ENCODE measurements at regions of chr5 and their contacts with region 1.

Region 1: DNA sequence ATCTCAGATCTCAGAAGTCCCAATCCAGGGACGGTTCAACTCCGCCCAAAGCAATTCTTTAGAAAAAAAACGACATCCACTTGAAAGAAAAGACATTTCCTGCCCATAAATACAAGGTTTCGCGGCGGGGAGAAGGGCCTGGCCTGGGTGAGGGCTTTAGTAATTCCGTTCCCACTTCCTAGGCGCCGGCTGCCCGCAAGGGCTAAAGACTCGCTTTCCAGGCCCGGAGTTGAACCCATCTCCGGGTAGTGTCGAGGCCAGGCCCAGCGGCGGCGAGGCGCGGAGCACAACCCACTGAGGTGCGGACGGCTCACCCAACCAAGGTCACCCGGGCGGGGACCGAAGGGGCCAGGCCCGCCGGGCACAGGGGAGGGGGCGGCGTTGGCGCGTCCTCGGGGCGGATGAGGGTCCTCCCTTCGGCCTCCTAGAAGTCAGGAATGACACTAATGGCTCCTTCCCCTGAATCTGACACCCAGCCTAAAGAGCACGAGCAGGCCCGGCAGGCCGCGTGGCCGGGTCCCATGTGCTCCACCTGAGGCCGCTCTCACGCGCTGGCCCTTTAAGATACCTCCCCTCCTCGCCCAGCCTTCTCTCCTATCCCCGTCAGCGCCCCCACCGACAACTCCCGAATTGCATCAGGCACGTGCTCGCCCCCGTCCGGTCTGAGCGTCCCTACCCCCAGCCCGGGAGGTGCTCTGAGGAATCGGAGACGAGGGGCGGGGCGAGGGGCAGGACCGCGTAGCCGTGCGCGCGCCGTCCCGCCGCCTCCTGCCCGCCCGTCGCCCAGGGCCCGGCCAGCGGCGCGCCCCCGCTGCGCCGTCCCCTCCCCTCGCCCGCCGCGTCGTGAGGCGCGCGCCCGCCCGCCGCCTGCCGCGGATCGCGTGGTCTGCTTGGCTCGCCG is 467 bp upstream of the LARP1 start:
- DNase-seq: peak; percentile 100
- ATAC-seq: peak; percentile 89
- H3K4me3 Mint-ChIP-seq: peak overlapping the region; percentile 88
- H3K27ac Mint-ChIP-seq: peak overlapping the region; percentile 99
- H3K4me1 Mint-ChIP-seq: peaks cover 33% of the 10 kb centered on the region
- H3K27me3 Mint-ChIP-seq: no peaks in the 10 kb centered on the region

Region 2: DNA sequence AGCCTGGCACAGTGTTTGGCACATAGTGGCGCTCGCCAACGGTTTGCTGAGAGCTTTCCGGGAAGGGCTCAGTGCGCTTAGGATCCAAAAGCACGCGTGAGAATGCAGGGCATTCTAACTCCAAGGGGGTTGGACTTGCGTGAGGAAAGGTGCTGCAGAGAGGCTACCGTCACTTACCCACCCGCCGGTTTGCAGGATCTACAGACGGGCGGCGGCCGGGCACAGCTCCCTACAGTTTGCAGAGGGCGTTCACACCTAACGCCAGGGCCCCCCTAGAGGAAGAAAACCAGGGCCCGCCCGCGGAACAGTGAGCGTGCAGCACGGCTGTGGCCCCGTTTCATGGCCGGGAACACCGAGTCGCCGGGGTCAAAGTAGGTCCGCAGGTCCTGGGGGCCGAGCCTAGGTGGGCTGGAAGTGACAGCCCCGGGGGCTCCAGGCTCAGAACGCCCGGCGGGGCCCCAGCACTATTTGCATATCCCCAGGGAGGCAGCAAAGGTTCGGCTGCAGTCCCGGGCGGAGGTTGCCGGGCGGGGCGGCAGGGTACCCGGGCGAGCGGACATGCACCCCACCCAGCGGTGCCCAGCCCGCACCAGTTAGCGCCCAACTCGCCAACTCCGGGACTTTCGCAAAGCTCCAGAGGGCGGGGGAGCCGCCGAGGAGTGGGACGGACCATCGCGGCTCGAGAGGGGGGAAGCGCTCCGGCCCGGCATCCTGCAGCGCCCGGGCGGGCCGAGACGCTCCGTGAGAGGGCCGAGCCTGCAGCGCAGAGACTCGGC is 564.7 kb before region 1 on chr5:
- CTCF ChIA-PET with region 1: no interaction called
- POLR2A ChIA-PET with region 1: no interaction called
- intact Hi-C with region 1: loop called in 1 of 2 experiments (anchors 5 kb)
- DNase-seq: peak; percentile 85
- ATAC-seq: peak; percentile 72
- H3K4me3 Mint-ChIP-seq: peak overlapping the region; percentile 77
- H3K27ac Mint-ChIP-seq: peak overlapping the region; percentile 69
- H3K4me1 Mint-ChIP-seq: peaks cover 28% of the 10 kb centered on the region
- H3K27me3 Mint-ChIP-seq: peaks cover 9% of the 10 kb centered on the region

Region 3: GRCh38 chr5:154249826-154250225 is 504.9 kb before region 1 on chr5:
- CTCF ChIA-PET with region 1: no interaction called
- POLR2A ChIA-PET with region 1: no interaction called
- intact Hi-C with region 1: no loop called
- DNase-seq: no peak
- ATAC-seq: no peak
- H3K4me3 Mint-ChIP-seq: no peak overlapping the region
- H3K27ac Mint-ChIP-seq: no peak overlapping the region
- H3K4me1 Mint-ChIP-seq: peaks cover 3% of the 10 kb centered on the region
- H3K27me3 Mint-ChIP-seq: no peaks in the 10 kb centered on the region

Region 4: GRCh38 chr5:154445422-154446182 is 309.1 kb before region 1 on chr5 and contains the start of gene SAP30L:
- CTCF ChIA-PET with region 1: no interaction called
- POLR2A ChIA-PET with region 1: no interaction called
- intact Hi-C with region 1: loop called (anchors 1 to 5 kb)
- DNase-seq: peak; percentile 96
- ATAC-seq: peak; percentile 97
- H3K4me3 Mint-ChIP-seq: peak within 1 kb of the TSS; percentile 98
- H3K27ac Mint-ChIP-seq: peak within 1 kb of the TSS; percentile 96
- H3K4me1 Mint-ChIP-seq: peaks cover 40% of the 10 kb centered on the region
- H3K27me3 Mint-ChIP-seq: no peaks in the 10 kb centered on the region
- total RNA-seq, gene SAP30L: 22.1 to 24.5 TPM

Region 5: DNA sequence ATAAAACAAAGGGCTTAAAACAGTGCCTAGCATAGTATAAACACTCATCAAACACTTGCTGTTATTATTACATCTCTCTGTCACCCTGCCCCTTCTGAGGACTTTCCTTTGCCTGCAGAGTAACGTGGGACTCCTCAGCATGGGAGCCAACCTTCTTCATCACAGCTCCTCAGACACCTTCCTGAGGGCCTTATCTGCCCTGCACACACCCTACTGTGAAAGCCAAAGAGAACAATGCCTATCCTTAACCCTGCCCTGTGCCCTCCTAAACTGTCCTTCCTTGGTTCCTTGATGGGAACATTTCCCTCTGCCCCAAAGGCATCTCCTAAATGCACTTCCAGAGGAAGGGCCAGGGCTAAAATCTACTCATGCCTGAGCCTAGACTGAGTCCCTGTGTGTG is 256.1 kb before region 1 on chr5:
- CTCF ChIA-PET with region 1: no interaction called
- POLR2A ChIA-PET with region 1: no interaction called
- intact Hi-C with region 1: no loop called
- DNase-seq: no peak
- ATAC-seq: no peak
- H3K4me3 Mint-ChIP-seq: no peak overlapping the region
- H3K27ac Mint-ChIP-seq: no peak overlapping the region
- H3K4me1 Mint-ChIP-seq: no peaks in the 10 kb centered on the region
- H3K27me3 Mint-ChIP-seq: peaks cover 40% of the 10 kb centered on the region

Region 6: GRCh38 chr5:154610321-154611154 is 144.2 kb before region 1 on chr5:
- CTCF ChIA-PET with region 1: no interaction called
- POLR2A ChIA-PET with region 1: no interaction called
- intact Hi-C with region 1: no loop called
- DNase-seq: peak; percentile 89
- ATAC-seq: peak; percentile 98
- H3K4me3 Mint-ChIP-seq: peak overlapping the region; percentile 22
- H3K27ac Mint-ChIP-seq: no peak overlapping the region
- H3K4me1 Mint-ChIP-seq: peaks cover 7% of the 10 kb centered on the region
- H3K27me3 Mint-ChIP-seq: peaks cover 36% of the 10 kb centered on the region

Region 7: DNA sequence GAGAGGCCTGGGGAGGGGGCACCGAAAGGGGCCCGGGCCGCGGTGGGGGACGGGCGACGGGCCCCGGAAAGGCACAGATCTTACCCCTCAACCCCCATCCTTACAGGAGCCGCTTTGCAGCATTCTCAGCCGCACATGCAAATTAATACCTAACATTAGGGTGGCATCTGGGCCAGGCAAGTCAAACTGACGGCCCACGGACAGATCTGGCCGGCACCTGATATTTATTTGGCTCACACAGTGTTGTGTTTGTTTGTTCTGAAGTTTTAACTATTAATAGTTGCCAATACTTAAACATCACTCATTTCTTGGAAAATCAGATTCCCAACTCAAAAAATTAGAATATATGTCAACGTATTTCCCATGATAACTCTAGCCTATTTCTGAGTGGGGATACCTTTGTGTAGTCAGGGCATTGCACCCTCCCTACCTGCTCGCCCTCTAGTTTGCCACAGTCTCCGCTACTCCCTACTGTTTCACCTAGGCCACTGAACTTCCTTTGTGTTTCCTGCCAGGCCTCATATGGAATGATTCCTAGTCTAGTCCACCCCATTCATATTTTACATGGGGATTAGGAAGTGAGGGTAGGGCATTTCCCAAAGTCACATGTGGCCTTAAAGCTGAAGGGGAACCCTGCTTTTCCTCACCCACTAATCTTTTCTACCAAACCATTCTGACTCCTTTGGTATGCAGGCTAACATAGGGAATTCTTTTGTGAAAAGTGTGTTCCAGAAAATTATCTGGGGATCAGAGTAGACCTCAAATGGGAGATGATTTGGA is 71.4 kb before region 1 on chr5:
- CTCF ChIA-PET with region 1: no interaction called
- POLR2A ChIA-PET with region 1: no interaction called
- intact Hi-C with region 1: loop called (anchors 1 to 2 kb)
- DNase-seq: no peak
- ATAC-seq: peak; percentile 38
- H3K4me3 Mint-ChIP-seq: peak overlapping the region; percentile 56
- H3K27ac Mint-ChIP-seq: no peak overlapping the region
- H3K4me1 Mint-ChIP-seq: peaks cover 5% of the 10 kb centered on the region
- H3K27me3 Mint-ChIP-seq: peaks cover 11% of the 10 kb centered on the region

Region 8: DNA sequence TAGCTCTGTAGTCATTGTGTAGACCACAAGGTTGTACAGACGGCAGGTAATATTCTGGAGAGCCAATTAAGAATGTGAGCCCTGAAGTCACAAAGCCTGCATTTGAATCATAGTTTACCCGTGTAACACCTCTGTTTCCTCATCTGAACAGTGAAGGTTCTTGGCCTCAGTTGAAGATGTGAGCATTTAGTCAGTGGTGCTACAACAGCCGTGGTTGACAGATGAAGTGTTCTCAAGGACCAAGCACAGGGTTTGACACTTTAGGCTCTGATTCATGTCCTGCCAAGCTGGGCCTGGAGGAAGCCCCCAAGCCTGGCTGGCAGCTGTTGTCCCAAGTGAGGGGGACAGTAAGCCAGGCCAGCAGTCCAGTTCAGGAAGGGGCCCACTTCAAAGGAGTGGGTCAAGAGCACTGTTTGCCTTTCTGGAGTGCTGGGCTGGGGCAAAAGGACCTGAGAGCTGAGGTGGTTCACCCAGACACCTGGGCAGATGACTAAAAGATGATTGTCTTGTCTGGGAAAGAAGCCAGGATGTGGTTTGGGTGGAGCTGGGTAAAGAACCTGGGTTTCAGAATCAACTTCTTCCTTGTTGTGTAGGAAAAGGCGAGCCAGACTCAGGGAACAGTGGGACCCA is 75.0 kb after region 1 on chr5:
- CTCF ChIA-PET with region 1: no interaction called
- POLR2A ChIA-PET with region 1: interaction called, 3 read pairs
- intact Hi-C with region 1: loop called in 1 of 2 experiments (anchors 2 kb)
- DNase-seq: peak; percentile 59
- ATAC-seq: peak; percentile 91
- H3K4me3 Mint-ChIP-seq: no peak overlapping the region
- H3K27ac Mint-ChIP-seq: peak overlapping the region; percentile 75
- H3K4me1 Mint-ChIP-seq: peaks cover 39% of the 10 kb centered on the region
- H3K27me3 Mint-ChIP-seq: no peaks in the 10 kb centered on the region

Region 9: DNA sequence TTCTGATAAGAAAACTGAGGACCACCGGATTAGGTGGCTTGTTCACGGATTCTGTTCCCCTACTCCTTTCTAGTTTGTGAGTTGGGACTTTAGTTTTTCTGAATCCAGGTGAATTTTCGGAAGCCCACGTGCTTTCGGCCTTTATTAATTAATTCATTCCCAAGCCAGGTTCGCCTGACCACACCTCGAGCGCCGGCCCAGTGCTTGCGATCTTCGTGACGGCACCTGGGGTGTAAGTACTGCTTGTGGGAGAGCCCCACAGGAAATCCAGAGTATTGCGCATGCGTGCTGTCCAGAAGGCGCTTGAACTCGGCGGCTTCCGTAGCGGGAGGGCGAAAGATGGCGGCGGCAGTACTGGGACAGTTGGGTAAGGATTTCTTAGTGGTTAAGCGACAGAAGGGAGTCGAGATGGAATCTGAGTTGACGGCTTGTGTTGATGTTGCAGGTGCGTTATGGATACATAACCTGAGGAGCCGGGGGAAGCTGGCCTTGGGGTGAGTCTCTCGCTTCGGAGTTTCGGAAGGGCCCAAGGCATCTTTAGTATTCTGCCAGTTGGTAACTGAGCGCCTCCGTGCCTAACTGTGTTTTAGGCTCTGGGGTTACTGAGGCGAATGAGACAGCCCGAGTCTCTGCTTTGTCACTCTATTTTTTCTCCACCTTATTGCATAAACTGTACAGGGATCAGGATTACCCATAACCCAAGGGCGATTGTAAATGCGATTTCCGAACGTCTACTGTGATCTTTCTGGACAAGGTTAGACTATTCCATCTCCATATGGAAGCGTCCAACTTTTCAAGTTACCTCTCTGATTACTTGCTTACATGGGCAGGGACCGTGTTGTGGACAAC is 186.3 kb after region 1 on chr5 and contains the start of gene MRPL22:
- CTCF ChIA-PET with region 1: no interaction called
- POLR2A ChIA-PET with region 1: interaction called, 3 read pairs
- intact Hi-C with region 1: loop called (anchors 1 kb)
- DNase-seq: peak; percentile 97
- ATAC-seq: peak; percentile 72
- H3K4me3 Mint-ChIP-seq: peak within 1 kb of the TSS; percentile 97
- H3K27ac Mint-ChIP-seq: peak within 1 kb of the TSS; percentile 96
- H3K4me1 Mint-ChIP-seq: peaks cover 40% of the 10 kb centered on the region
- H3K27me3 Mint-ChIP-seq: no peaks in the 10 kb centered on the region
- total RNA-seq, gene MRPL22: 77.2 to 86.7 TPM

Region 10: GRCh38 chr5:155017610-155018009 is 262.9 kb after region 1 on chr5:
- CTCF ChIA-PET with region 1: no interaction called
- POLR2A ChIA-PET with region 1: no interaction called
- intact Hi-C with region 1: no loop called
- DNase-seq: no peak
- ATAC-seq: peak; percentile 68
- H3K4me3 Mint-ChIP-seq: no peak overlapping the region
- H3K27ac Mint-ChIP-seq: no peak overlapping the region
- H3K4me1 Mint-ChIP-seq: peaks cover 3% of the 10 kb centered on the region
- H3K27me3 Mint-ChIP-seq: peaks cover 21% of the 10 kb centered on the region